Right ventricle myocardium inferior (tissue), 1 donor: ENCODE measurements at regions of chr11 and their contacts with region 1.

Region 1: GRCh38 chr11:122209619-122210366 is 93.8 kb upstream of the BLID start:
- DNase-seq: no peak
- ATAC-seq: peak; percentile 78

Region 2: GRCh38 chr11:121983906-121984305 is 225.9 kb before region 1 on chr11:
- intact Hi-C with region 1: no loop called
- DNase-seq: no peak
- ATAC-seq: no peak

Region 3: GRCh38 chr11:122020902-122021301 is 188.9 kb before region 1 on chr11:
- intact Hi-C with region 1: loop called (anchors 5 kb)
- DNase-seq: no peak
- ATAC-seq: no peak